ENCODE measurements at regions of chr11 and their contacts with region 1.

Region 1: GRCh38 chr11:86068951-86069407 is at the start of gene PICALM:
- DNase-seq: peak; percentile 94 to 97 (median 97)
- H3K4me3 ChIP-seq: peak within 1 kb of the TSS; percentile 34 to 92
- H3K4me3 Mint-ChIP-seq: peak within 1 kb of the TSS; percentile 93 to 99 (median 98)
- H3K27ac ChIP-seq: peak within 1 kb of the TSS; percentile 81
- H3K27ac Mint-ChIP-seq: peak within 1 kb of the TSS; percentile 89 to 98 (median 96)
- H3K4me1 ChIP-seq: peaks cover 32% of the 10 kb centered on the region
- H3K4me1 Mint-ChIP-seq: peaks cover 18 to 46% (median 28%) of the 10 kb centered on the region in 4 donors
- H3K27me3 ChIP-seq: no peaks in the 10 kb centered on the region
- H3K27me3 Mint-ChIP-seq: peaks cover 0 to 2% of the 10 kb centered on the region in 2 donors
- total RNA-seq, gene PICALM: 127 to 138 TPM

Region 2: DNA sequence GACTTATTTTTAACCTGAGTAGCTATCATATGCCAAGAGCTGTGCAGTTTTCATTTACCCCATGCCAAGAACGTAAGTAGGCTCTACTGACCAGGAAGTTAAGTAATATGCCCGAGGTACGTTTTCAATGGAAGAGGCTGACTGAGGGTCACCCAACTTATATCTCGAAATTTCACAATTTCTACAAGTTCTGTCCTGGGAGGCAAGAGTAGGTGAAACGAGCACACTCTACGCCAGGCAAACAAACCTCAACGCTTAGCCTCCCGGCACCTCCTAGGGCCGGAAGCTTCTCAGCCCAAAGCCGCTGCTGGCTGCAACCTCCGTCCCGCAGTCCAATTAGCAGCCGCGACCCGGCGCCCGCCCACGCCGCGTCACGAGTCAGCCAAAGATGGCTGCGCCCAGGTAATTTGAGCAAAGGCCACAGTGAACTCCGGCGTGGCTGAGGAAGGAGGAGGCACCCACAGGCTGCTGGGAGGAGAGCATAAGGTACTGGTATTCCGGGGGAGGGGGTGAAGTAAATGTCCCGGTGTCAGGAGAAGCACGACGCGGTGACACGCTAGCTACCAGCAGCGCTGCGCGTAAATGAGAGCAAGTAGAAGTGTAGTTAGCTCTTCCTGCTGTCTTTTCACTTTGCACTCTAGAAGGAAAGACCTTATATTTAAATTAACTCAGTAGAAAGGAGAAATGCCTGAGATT is 421.2 kb before region 1 on chr11 and contains the start of gene TMEM126A:
- CTCF ChIA-PET with region 1: no interaction called
- POLR2A ChIA-PET with region 1: interaction called, 14 read pairs
- intact Hi-C with region 1: no loop called
- DNase-seq: peak; percentile 87 to 93 (median 89)
- H3K4me3 ChIP-seq: peak within 1 kb of the TSS; percentile 57 to 76
- H3K4me3 Mint-ChIP-seq: peak within 1 kb of the TSS; percentile 92 to 99 (median 96)
- H3K27ac ChIP-seq: peak within 1 kb of the TSS; percentile 72
- H3K27ac Mint-ChIP-seq: peak within 1 kb of the TSS; percentile 88 to 99 (median 96)
- H3K4me1 ChIP-seq: peaks cover 26% of the 10 kb centered on the region
- H3K4me1 Mint-ChIP-seq: peaks cover 19 to 32% (median 27%) of the 10 kb centered on the region in 4 donors
- H3K27me3 ChIP-seq: peaks cover 4% of the 10 kb centered on the region
- H3K27me3 Mint-ChIP-seq: peaks cover 5 to 8% of the 10 kb centered on the region in 2 donors
- total RNA-seq, gene TMEM126A: 17.4 to 17.5 TPM

Region 3: DNA sequence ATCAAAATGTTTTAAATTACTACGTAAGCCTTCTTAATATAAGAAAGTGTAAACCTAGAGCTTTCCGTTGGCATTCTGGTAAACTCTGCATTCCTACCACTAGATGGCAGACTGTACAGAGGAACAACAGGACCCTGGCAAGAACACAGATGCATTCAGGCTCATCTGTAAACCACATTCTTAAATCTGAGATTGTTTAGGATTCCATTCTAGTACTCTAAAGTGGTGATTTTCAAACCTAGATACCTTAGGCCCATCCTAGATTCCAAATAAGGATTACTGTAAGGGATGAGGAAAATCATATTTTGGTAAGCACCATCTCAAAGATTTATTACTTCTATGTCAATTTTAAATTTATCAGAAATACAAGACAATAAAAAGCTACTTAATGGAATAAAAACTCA is 27.0 kb before region 1 on chr11:
- CTCF ChIA-PET with region 1: interaction called, 11 read pairs
- POLR2A ChIA-PET with region 1: interaction called, 26 read pairs
- intact Hi-C with region 1: loop called (anchors 1 kb)
- DNase-seq: peak; percentile 72 to 76 (median 74)
- H3K4me3 ChIP-seq: no peak overlapping the region
- H3K4me3 Mint-ChIP-seq: peak overlapping the region in 4 of 8 donors; percentile 0 to 35 (median 4)
- H3K27ac ChIP-seq: no peak overlapping the region
- H3K27ac Mint-ChIP-seq: peak overlapping the region; percentile 20 to 84 (median 64)
- H3K4me1 ChIP-seq: peaks cover 58% of the 10 kb centered on the region
- H3K4me1 Mint-ChIP-seq: peaks cover 49 to 73% (median 62%) of the 10 kb centered on the region in 4 donors
- H3K27me3 ChIP-seq: no peaks in the 10 kb centered on the region
- H3K27me3 Mint-ChIP-seq: no peaks in the 10 kb centered on the region

Region 4: GRCh38 chr11:86202013-86202336 is 133.0 kb after region 1 on chr11:
- CTCF ChIA-PET with region 1: interaction called, 7 read pairs
- POLR2A ChIA-PET with region 1: interaction called, 16 read pairs
- intact Hi-C with region 1: no loop called
- DNase-seq: peak in 1 of 5 donors; percentile 8
- H3K4me3 ChIP-seq: peak overlapping the region; percentile 44 to 55
- H3K4me3 Mint-ChIP-seq: no peak overlapping the region
- H3K27ac ChIP-seq: peak overlapping the region; percentile 52
- H3K27ac Mint-ChIP-seq: no peak overlapping the region
- H3K4me1 ChIP-seq: peaks cover 15% of the 10 kb centered on the region
- H3K4me1 Mint-ChIP-seq: no peaks in the 10 kb centered on the region
- H3K27me3 ChIP-seq: no peaks in the 10 kb centered on the region
- H3K27me3 Mint-ChIP-seq: no peaks in the 10 kb centered on the region

Region 5: GRCh38 chr11:86302100-86302793 is 233.3 kb after region 1 on chr11 and contains the start of gene HIKESHI:
- CTCF ChIA-PET with region 1: no interaction called
- POLR2A ChIA-PET with region 1: interaction called, 4 read pairs
- intact Hi-C with region 1: loop called (anchors 2 kb)
- DNase-seq: peak; percentile 83 to 95 (median 84)
- H3K4me3 ChIP-seq: peak within 1 kb of the TSS; percentile 54 to 85
- H3K4me3 Mint-ChIP-seq: peak within 1 kb of the TSS; percentile 94 to 100 (median 100)
- H3K27ac ChIP-seq: peak within 1 kb of the TSS; percentile 87
- H3K27ac Mint-ChIP-seq: peak within 1 kb of the TSS; percentile 93 to 100 (median 99)
- H3K4me1 ChIP-seq: peaks cover 24% of the 10 kb centered on the region
- H3K4me1 Mint-ChIP-seq: peaks cover 12 to 29% (median 23%) of the 10 kb centered on the region in 4 donors
- H3K27me3 ChIP-seq: no peaks in the 10 kb centered on the region
- H3K27me3 Mint-ChIP-seq: peaks cover 0 to 1% of the 10 kb centered on the region in 2 donors
- total RNA-seq, gene HIKESHI: 26.6 to 33.3 TPM